ENCODE measurements at regions of chr5 and their contacts with region 1.

Region 1: DNA sequence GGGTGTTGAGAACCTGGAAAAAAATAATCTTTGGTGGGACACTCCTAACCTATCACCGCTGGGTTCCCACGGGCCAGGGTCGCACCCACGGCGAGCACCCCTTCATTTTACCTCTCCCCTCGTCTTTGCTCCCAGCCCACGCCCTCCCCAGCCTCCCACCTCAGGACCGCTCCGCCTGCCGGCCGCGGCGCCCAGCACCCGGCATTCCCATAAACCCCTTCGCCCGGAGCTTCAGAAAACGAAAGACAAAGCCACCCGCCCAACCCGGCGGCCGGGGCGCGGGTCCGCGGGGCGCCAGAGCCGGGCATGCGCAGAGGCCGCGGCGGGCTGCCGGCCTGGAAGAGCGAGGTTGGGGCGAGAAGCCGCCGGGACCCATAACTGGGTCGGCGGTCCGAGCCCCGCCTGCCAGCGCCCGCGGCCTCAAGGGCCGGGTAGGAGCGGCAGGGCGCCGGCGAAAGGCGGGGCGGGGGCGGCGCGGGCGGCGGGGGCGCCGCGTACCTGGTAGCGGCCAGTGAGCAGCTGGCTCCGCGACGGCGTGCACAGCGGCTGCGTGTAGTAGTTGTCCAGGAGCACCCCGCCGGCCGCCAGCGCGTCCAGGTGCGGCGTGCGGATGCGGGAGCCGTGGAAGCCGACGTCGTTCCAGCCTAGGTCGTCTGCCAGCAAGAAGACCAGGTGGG is 533 bp downstream of the ARSB start:
- DNase-seq: peak; percentile 81
- H3K4me3 Mint-ChIP-seq: peak overlapping the region; percentile 85
- H3K27ac Mint-ChIP-seq: peak overlapping the region; percentile 90
- H3K4me1 Mint-ChIP-seq: peaks cover 44% of the 10 kb centered on the region
- H3K27me3 Mint-ChIP-seq: peaks cover 8% of the 10 kb centered on the region

Region 2: DNA sequence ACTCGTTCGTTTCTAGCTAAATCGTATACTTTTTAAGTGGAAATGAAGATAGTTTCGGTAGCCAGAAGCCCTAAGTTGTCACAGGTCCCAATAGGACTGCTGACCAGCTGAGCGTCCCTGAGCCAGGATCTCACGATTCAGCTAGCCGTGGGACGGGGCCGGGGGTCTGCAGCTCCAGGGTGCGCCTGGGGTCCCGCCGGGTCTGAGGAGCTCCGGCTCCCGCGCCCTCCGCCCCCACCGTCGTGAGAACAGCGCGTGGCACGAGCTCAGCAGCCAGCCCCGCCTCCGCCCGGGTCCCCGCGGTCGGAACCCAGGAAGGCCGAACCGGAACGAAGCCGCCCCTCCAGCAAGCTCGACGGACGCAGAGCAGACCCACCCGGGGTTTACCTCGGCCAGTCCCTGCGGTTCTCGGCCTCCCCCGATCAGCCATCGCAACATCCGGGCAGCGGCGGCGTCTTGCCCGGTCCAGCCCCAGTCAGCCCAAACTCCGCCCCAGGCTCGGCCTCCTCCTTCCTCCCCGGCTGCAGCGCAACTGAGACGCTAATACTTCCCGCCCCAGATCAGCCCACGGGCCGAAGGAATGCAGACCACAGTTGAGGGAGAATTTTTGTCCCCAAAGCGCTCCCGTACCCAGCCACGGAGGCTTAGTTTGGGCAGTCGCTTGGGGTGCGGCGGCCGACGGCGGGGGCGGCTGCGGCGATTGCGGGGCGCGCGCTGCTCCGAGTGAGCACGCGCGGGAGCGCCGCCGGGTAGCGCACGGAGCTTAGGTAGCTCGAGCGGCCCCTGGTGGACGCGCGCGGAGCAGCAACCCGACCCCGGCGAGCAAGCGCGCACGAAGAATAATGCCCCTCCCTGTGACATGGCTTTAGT is 1492.6 kb before region 1 on chr5 and contains the start of gene WDR41:
- intact Hi-C with region 1: loop called (anchors 10 kb)
- DNase-seq: peak; percentile 81
- H3K4me3 Mint-ChIP-seq: peak within 1 kb of the TSS; percentile 91
- H3K27ac Mint-ChIP-seq: peak within 1 kb of the TSS; percentile 90
- H3K4me1 Mint-ChIP-seq: peaks cover 28% of the 10 kb centered on the region
- H3K27me3 Mint-ChIP-seq: peaks cover 13% of the 10 kb centered on the region
- total RNA-seq, gene WDR41: 27.0 and 27.2 TPM in 2 replicates

Region 3: GRCh38 chr5:78359831-78360673 is 624.5 kb before region 1 on chr5 and contains the start of gene SCAMP1:
- intact Hi-C with region 1: loop called (anchors 2 kb)
- DNase-seq: peak; percentile 93
- H3K4me3 Mint-ChIP-seq: peak within 1 kb of the TSS; percentile 98
- H3K27ac Mint-ChIP-seq: peak within 1 kb of the TSS; percentile 92
- H3K4me1 Mint-ChIP-seq: peaks cover 32% of the 10 kb centered on the region
- H3K27me3 Mint-ChIP-seq: no peaks in the 10 kb centered on the region
- total RNA-seq, gene SCAMP1: 21.3 and 21.7 TPM in 2 replicates

Region 4: GRCh38 chr5:78899922-78900362 is 84.6 kb before region 1 on chr5:
- intact Hi-C with region 1: loop called (anchors 5 kb)
- DNase-seq: no peak
- H3K4me3 Mint-ChIP-seq: no peak overlapping the region
- H3K27ac Mint-ChIP-seq: no peak overlapping the region
- H3K4me1 Mint-ChIP-seq: no peaks in the 10 kb centered on the region
- H3K27me3 Mint-ChIP-seq: no peaks in the 10 kb centered on the region

Region 5: GRCh38 chr5:79133657-79134451 is 149.3 kb after region 1 on chr5:
- intact Hi-C with region 1: loop called (anchors 1 kb)
- DNase-seq: peak; percentile 28
- H3K4me3 Mint-ChIP-seq: peak overlapping the region; percentile 64
- H3K27ac Mint-ChIP-seq: peak overlapping the region; percentile 80
- H3K4me1 Mint-ChIP-seq: peaks cover 10% of the 10 kb centered on the region
- H3K27me3 Mint-ChIP-seq: peaks cover 5% of the 10 kb centered on the region

Region 6: DNA sequence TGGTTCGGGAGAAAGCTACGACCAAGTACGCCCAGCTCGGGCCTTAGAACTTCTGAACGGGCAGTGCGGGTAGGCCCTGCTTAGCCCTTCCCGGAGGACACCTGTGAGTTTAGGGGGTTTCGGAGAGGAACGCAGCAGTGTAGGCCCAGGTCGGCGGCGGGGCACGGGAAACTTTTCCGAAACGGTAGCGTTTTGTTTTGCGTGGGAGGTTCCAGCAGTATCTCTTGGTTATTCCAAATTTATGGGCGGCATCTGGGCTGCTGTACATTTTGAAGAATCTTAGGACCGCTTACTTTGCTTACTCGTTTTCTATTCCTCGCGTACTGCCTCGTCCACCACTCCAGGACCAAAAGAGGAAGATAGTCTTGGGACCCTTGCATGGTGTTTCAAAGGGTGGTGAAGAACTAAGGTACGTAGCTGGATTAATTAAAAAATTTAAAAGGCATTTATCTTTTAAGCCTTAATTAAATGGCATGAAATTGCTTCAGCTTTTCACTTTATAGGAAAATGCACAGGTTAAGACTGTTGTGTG is 628.2 kb after region 1 on chr5:
- intact Hi-C with region 1: loop called (anchors 2 kb)
- DNase-seq: no peak
- H3K4me3 Mint-ChIP-seq: peak overlapping the region; percentile 91
- H3K27ac Mint-ChIP-seq: peak overlapping the region; percentile 97
- H3K4me1 Mint-ChIP-seq: peaks cover 45% of the 10 kb centered on the region
- H3K27me3 Mint-ChIP-seq: no peaks in the 10 kb centered on the region

Measured in activated T-helper 1 cell treated with anti-CD3 and anti-CD28 coated beads, Interleukin-12 subunit alpha, Interleukin-12 subunit beta, Interleukin-2, Interleukin-4 antibody, amounts not matched to agents 30 ng/mL and 10 ng/mL and 1 ng/mL, durations not matched to agents 14 hours and 24 hours and 36 hours (primary cell).